Calu3 (cell line): ENCODE measurements at regions of chr7 and their contacts with region 1.

Region 1: GRCh38 chr7:93245525-93246432 is 13.6 kb downstream of the VPS50 start:
- DNase-seq: no peak
- H3K4me3 Mint-ChIP-seq: no peak overlapping the region
- H3K27ac Mint-ChIP-seq: no peak overlapping the region
- H3K4me1 Mint-ChIP-seq: no peaks in the 10 kb centered on the region
- H3K27me3 Mint-ChIP-seq: no peaks in the 10 kb centered on the region
- CTCF ChIP-seq: peak; percentile 43

Region 2: DNA sequence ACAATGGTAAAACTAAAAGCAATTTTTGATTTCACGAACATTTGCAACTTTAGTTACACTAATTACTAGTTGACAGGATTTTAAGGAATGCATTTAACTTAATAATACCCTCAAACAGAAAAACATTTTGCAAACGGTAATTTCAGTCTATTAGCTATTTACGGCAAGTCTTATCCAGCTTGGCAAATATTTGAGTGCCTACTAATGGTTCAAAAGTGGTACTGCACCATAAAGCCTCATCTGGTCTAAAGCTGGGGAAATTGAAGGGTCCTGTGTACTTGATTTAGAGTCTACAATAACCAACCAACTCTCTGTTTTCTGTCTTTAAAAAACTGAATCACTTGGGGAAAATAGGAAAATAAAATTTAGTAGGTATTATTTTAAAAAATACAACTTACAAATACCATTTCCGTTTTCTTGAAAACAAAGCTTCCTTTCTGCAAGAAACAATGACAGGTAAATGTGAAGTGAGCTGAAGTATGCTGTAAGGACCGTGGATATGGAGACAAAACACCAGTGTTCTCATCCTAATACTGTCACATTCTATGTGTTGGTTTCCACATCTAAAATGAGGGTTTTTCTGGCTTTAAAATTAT is 128.7 kb after region 1 on chr7:
- CTCF ChIA-PET with region 1: interaction called, 4 read pairs
- intact Hi-C with region 1: loop called (anchors 5 kb)
- DNase-seq: peak; percentile 10
- H3K4me3 Mint-ChIP-seq: no peak overlapping the region
- H3K27ac Mint-ChIP-seq: no peak overlapping the region
- H3K4me1 Mint-ChIP-seq: no peaks in the 10 kb centered on the region
- H3K27me3 Mint-ChIP-seq: peaks cover 44% of the 10 kb centered on the region
- CTCF ChIP-seq: peak; percentile 69

Region 3: DNA sequence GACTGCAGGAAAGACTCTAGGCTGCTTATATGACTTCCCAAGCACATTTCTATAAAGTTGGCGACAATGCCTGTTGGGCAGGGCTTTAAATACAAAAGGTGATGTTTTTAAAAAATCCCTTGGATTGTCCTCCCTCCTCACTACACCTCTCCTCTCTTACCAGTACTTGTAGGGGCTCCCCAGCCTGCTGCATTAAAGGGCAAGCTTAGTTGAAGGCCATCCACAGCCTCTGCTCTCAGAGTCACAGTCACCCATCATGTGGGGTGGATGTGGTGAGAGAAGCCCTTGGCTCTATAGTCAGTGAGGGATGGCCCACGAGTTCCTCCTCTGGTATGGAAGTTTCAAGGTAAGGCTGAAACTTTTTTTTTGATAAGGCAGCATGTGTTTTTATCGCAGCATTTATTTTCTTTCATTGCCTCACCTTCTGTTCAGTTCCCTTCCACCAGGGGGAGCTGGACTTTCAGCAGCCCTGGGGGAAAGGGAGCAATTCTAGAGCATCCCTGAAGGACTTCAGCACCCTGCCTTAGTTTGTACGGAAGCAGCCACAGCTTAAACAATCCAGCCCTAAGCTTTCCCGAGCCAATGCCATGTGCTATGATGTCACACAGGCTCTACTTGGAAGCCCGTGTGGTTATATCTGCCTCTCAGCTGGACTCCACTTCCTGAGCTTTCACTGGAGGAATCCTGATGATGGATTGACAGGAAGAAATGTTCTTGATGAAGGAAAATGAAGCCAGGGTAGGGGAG is 196.9 kb after region 1 on chr7:
- CTCF ChIA-PET with region 1: no interaction called
- intact Hi-C with region 1: loop called (anchors 2 kb)
- DNase-seq: peak; percentile 70
- H3K4me3 Mint-ChIP-seq: no peak overlapping the region
- H3K27ac Mint-ChIP-seq: no peak overlapping the region
- H3K4me1 Mint-ChIP-seq: no peaks in the 10 kb centered on the region
- H3K27me3 Mint-ChIP-seq: peaks cover 65% of the 10 kb centered on the region
- CTCF ChIP-seq: peak; percentile 81

Region 4: DNA sequence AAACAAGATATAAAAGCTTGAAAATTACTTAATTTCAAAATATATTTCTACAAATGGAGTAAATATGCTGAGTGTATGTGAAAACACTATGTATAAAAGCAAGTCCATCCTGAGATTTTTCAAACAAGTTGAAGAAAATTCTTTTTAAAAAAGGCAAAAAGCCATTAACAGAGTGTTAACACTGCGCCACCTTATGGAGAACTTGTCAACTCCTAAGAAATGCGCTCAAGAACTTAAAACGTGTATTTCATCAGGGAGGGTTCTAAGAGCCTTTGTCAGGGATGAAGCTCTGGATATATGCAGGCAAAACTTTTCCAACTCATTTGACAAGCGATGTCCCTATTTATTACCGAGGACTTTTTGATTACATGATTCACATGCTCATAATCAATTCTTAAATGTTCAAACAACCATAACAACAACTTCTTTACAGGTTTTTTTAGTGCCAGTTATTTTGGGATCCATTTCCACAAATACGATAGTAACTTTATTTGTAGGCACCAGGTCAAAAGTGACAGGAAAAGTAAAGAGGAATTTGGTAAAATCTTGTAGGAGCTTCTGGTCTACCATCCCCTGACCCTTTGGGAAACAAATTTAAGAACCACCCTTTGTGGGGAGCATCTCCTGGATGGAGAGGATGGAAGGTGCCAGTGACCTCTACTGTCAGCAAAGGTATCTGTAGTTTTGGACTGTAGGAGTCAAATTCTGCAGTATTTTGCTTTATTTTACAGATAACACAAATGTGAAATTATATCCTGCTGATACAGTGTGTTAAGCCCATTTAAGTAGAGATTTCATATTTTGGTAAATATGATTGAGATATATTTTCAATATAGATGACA is 305.5 kb after region 1 on chr7:
- CTCF ChIA-PET with region 1: no interaction called
- intact Hi-C with region 1: loop called (anchors 1 kb)
- DNase-seq: peak; percentile 21
- H3K4me3 Mint-ChIP-seq: no peak overlapping the region
- H3K27ac Mint-ChIP-seq: no peak overlapping the region
- H3K4me1 Mint-ChIP-seq: no peaks in the 10 kb centered on the region
- H3K27me3 Mint-ChIP-seq: peaks cover 12% of the 10 kb centered on the region
- CTCF ChIP-seq: peak; percentile 38

Region 5: DNA sequence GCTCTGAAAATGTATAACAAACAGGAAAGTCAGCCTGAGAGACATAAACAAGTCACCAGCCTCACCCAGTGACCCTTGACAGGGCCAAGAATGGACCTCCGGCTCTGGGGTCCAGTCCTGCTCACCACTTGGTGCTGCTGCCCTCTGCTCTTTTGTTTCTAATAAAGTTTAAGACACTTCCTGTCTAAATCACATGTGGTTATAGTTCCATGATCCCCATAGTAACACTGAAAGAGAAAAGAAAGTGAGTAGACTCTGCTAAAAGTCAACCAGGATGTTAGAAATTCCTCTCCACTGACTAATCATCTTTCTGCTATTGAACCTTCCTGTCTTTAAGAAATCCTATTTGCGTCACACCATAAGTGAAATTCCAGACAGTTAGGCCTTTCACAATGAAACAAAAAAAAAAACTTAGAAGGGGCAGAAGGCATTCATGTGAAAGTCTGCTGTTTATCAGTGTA is 937.5 kb after region 1 on chr7:
- CTCF ChIA-PET with region 1: no interaction called
- intact Hi-C with region 1: no loop called
- DNase-seq: peak; percentile 56
- H3K4me3 Mint-ChIP-seq: peak overlapping the region; percentile 39
- H3K27ac Mint-ChIP-seq: peak overlapping the region; percentile 99
- H3K4me1 Mint-ChIP-seq: peaks cover 37% of the 10 kb centered on the region
- H3K27me3 Mint-ChIP-seq: no peaks in the 10 kb centered on the region
- CTCF ChIP-seq: no peak